ENCODE measurements at regions of chr12 and their contacts with region 1.

Region 1: GRCh38 chr12:67943226-67943892 is 45.9 kb upstream of the IFNG-AS1 start:
- DNase-seq: peak; percentile 10 to 76 (median 64)
- ATAC-seq: peak; percentile 81
- H3K4me3 ChIP-seq: no peak overlapping the region
- H3K4me3 Mint-ChIP-seq: no peak overlapping the region
- H3K27ac ChIP-seq: no peak overlapping the region
- H3K27ac Mint-ChIP-seq: no peak overlapping the region
- H3K4me1 ChIP-seq: no peaks in the 10 kb centered on the region
- H3K4me1 Mint-ChIP-seq: peaks cover 0 to 6% (median 0%) of the 10 kb centered on the region in 7 donors
- H3K27me3 ChIP-seq: no peaks in the 10 kb centered on the region
- H3K27me3 Mint-ChIP-seq: peaks cover 0 to 18% (median 0%) of the 10 kb centered on the region in 5 donors

Region 2: GRCh38 chr12:66901138-66901932 is 1042.0 kb before region 1 on chr12:
- CTCF ChIA-PET with region 1: no interaction called
- POLR2A ChIA-PET with region 1: no interaction called
- intact Hi-C with region 1: loop called in 1 of 2 experiments (anchors 1 kb)
- DNase-seq: peak in 1 of 9 donors; percentile 4
- ATAC-seq: peak; percentile 69
- H3K4me3 ChIP-seq: no peak overlapping the region
- H3K4me3 Mint-ChIP-seq: peak overlapping the region in 9 of 10 donors; percentile 14 to 78 (median 69)
- H3K27ac ChIP-seq: peak overlapping the region; percentile 44
- H3K27ac Mint-ChIP-seq: peak overlapping the region in 8 of 9 donors; percentile 34 to 84 (median 67)
- H3K4me1 ChIP-seq: peaks cover 0 to 20% of the 10 kb centered on the region in 2 donors
- H3K4me1 Mint-ChIP-seq: peaks cover 14 to 52% (median 47%) of the 10 kb centered on the region in 7 donors
- H3K27me3 ChIP-seq: no peaks in the 10 kb centered on the region
- H3K27me3 Mint-ChIP-seq: peaks cover 0 to 4% (median 0%) of the 10 kb centered on the region in 5 donors

Region 3: GRCh38 chr12:67355578-67356379 is 587.6 kb before region 1 on chr12:
- CTCF ChIA-PET with region 1: interaction called, 160 read pairs
- POLR2A ChIA-PET with region 1: interaction called, 10 read pairs
- intact Hi-C with region 1: loop called (anchors 1 kb)
- DNase-seq: peak in 7 of 9 donors; percentile 27 to 68 (median 61)
- ATAC-seq: peak; percentile 70
- H3K4me3 ChIP-seq: no peak overlapping the region
- H3K4me3 Mint-ChIP-seq: peak overlapping the region in 7 of 10 donors; percentile 23 to 65 (median 51)
- H3K27ac ChIP-seq: no peak overlapping the region
- H3K27ac Mint-ChIP-seq: peak overlapping the region in 3 of 9 donors; percentile 42 to 63 (median 54)
- H3K4me1 ChIP-seq: peaks cover 0 to 5% of the 10 kb centered on the region in 2 donors
- H3K4me1 Mint-ChIP-seq: peaks cover 2 to 21% (median 16%) of the 10 kb centered on the region in 7 donors
- H3K27me3 ChIP-seq: no peaks in the 10 kb centered on the region
- H3K27me3 Mint-ChIP-seq: no peaks in the 10 kb centered on the region

Region 4: DNA sequence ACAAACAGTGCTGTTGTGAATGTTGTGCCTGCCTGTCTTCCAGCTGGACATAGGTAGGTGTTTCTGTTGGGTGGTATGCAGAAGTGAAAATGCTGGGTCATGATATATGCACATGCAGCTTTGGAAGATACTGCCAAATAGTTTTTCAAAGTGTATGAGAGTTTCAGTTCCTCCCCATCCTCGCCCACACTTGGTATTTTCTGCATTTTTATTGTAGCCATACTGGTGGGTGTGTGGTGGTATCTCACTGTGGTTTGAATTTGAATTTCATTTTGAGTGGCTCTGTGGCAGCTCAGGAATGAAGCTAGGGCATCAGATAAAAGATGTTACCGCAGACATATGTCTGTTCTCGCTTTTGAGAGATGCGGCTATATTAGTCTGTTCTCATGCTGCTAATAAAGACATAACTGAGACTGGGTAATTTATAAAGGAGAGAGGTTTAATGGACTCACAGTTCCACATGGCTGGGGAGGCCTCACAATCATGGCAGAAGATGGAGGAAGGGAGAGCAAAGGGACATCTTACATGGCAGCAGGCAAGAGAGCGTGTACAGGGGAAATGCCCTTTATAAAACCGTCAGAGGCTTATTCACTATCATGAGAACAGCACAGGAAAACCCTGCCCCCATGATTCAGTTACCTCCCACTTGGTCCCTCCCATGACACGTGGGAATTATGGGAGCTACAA is 491.1 kb before region 1 on chr12:
- CTCF ChIA-PET with region 1: interaction called, 3 read pairs
- POLR2A ChIA-PET with region 1: interaction called, 3 read pairs
- intact Hi-C with region 1: loop called in 1 of 2 experiments (anchors 1 kb)
- DNase-seq: peak in 1 of 9 donors; percentile 32
- ATAC-seq: peak; percentile 33
- H3K4me3 ChIP-seq: no peak overlapping the region
- H3K4me3 Mint-ChIP-seq: peak overlapping the region in 4 of 10 donors; percentile 3 to 59 (median 6)
- H3K27ac ChIP-seq: no peak overlapping the region
- H3K27ac Mint-ChIP-seq: peak overlapping the region in 2 of 9 donors; percentile 7 to 31
- H3K4me1 ChIP-seq: peaks cover 12 to 28% of the 10 kb centered on the region in 2 donors
- H3K4me1 Mint-ChIP-seq: peaks cover 28 to 54% (median 42%) of the 10 kb centered on the region in 7 donors
- H3K27me3 ChIP-seq: no peaks in the 10 kb centered on the region
- H3K27me3 Mint-ChIP-seq: peaks cover 0 to 29% (median 0%) of the 10 kb centered on the region in 5 donors

Region 5: GRCh38 chr12:67592216-67593011 is 350.9 kb before region 1 on chr12:
- CTCF ChIA-PET with region 1: interaction called, 3 read pairs
- POLR2A ChIA-PET with region 1: no interaction called
- intact Hi-C with region 1: loop called in 1 of 2 experiments (anchors 1 kb)
- DNase-seq: peak in 5 of 9 donors; percentile 20 to 40 (median 33)
- ATAC-seq: no peak
- H3K4me3 ChIP-seq: no peak overlapping the region
- H3K4me3 Mint-ChIP-seq: peak overlapping the region; percentile 6 to 84 (median 46)
- H3K27ac ChIP-seq: no peak overlapping the region
- H3K27ac Mint-ChIP-seq: peak overlapping the region; percentile 79 to 94 (median 86)
- H3K4me1 ChIP-seq: peaks cover 37 to 55% of the 10 kb centered on the region in 2 donors
- H3K4me1 Mint-ChIP-seq: peaks cover 40 to 79% (median 58%) of the 10 kb centered on the region in 7 donors
- H3K27me3 ChIP-seq: no peaks in the 10 kb centered on the region
- H3K27me3 Mint-ChIP-seq: no peaks in the 10 kb centered on the region

Region 6: GRCh38 chr12:67977668-67978067 is 34.3 kb after region 1 on chr12:
- CTCF ChIA-PET with region 1: no interaction called
- POLR2A ChIA-PET with region 1: no interaction called
- intact Hi-C with region 1: no loop called
- DNase-seq: no peak
- ATAC-seq: no peak
- H3K4me3 ChIP-seq: no peak overlapping the region
- H3K4me3 Mint-ChIP-seq: no peak overlapping the region
- H3K27ac ChIP-seq: no peak overlapping the region
- H3K27ac Mint-ChIP-seq: no peak overlapping the region
- H3K4me1 ChIP-seq: no peaks in the 10 kb centered on the region
- H3K4me1 Mint-ChIP-seq: peaks cover 0 to 4% (median 0%) of the 10 kb centered on the region in 7 donors
- H3K27me3 ChIP-seq: no peaks in the 10 kb centered on the region
- H3K27me3 Mint-ChIP-seq: peaks cover 10 to 19% (median 11%) of the 10 kb centered on the region in 5 donors

Region 7: GRCh38 chr12:68080577-68080976 is 137.2 kb after region 1 on chr12:
- CTCF ChIA-PET with region 1: no interaction called
- POLR2A ChIA-PET with region 1: no interaction called
- intact Hi-C with region 1: no loop called
- DNase-seq: peak in 4 of 9 donors; percentile 0 to 19 (median 10)
- ATAC-seq: peak; percentile 54
- H3K4me3 ChIP-seq: no peak overlapping the region
- H3K4me3 Mint-ChIP-seq: peak overlapping the region in 3 of 10 donors; percentile 8 to 57 (median 38)
- H3K27ac ChIP-seq: no peak overlapping the region
- H3K27ac Mint-ChIP-seq: peak overlapping the region in 2 of 9 donors; percentile 70 to 86
- H3K4me1 ChIP-seq: peaks cover 0 to 12% of the 10 kb centered on the region in 2 donors
- H3K4me1 Mint-ChIP-seq: peaks cover 0 to 30% (median 8%) of the 10 kb centered on the region in 7 donors
- H3K27me3 ChIP-seq: no peaks in the 10 kb centered on the region
- H3K27me3 Mint-ChIP-seq: no peaks in the 10 kb centered on the region

Measured in naive thymus-derived CD4-positive, alpha-beta T cell (primary cell).